ENCODE measurements at regions of chr19 and their contacts with region 1.

Region 1: GRCh38 chr19:40662921-40663694 is 27.3 kb downstream of the NUMBL start:
- DNase-seq: peak; percentile 80 to 95
- ATAC-seq: peak; percentile 96

Region 2: DNA sequence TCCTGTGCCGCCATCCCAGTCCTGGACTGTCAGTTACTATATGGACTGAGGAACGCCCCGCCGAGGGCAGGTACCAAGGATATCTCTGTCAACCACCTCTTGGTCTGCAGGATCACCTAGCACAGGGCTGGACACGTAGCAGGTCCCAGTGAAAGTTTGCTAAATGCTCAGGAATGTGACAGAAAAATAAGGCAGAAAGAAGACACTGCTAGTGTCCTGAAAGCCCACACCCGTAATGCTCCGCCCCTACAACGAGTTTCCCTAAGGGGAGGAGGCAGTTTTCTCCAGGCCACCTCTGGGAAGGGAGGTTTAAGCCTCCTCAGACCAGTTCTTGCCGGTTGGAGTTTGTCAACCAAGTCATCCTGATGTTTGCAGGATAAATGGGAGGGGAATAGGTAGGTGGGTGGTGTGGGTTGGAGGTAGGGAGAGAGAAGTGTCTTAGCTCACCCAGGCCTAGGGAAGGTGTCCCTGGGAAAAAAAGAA is 217.3 kb before region 1 on chr19:
- intact Hi-C with region 1: no loop called
- DNase-seq: peak; percentile 61 to 73
- ATAC-seq: peak; percentile 19

Region 3: DNA sequence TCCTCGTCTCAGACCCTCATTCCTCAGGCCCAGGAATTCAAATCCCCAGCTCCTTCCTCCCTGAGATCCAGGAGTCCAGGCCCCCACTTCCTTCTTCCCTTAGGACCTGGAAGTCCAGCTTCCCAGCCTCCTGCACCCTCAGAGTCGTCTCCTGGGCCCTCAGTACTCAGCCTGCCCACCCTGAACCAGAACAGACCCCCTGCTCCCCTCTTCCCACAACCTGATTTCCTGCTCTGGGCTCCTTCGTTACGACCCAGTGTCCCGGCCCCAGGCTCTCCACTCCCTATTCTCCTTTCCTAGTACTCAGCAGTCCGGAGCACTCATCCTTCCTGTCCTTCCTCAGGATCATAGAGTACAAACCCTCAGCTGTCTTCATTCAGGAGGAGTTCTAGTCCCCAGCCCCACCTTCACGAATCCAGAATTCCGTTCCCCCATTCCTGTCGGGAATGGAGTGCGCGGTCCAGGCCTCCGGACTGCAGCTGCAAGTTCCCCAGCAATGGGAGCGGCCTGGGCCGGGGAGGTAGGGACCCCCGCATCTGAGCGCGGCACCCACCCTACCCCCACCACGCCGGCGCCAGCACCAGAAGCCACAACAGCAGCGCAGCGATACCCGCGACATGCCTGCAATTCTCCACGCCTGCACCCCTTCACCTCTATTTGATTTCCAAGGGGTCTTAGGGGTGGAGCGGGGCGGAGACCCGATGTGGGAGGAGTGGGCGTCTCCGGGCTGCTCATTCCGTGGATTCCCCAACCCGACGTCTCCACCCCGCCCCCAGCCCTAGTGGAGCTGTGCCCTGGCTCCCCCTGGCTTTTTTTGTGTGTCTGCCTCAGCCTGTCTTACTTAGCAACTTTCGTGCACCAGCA is 148.6 kb after region 1 on chr19:
- intact Hi-C with region 1: loop called (anchors 5 kb)
- DNase-seq: peak in 1 of 2 donors; percentile 43
- ATAC-seq: peak; percentile 16

Region 4: DNA sequence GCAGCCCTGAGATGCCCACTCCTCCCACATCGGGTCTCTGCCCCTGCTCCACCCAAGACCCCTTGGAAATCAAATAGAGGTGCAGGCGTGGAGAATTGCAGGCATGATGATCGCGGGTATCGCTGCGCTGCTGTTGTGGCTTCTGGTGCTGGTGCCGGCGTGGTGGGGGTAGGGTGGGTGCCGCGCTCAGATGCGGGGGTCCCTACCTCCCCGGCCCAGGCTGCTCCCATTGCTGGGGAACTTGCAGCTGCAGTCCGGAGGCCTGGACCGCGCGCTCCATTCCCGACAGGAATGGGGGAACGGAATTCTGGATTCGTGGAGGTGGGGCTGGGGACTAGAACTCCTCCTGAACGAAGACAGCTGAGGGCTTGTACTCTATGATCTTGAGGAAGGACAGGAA is 471.5 kb after region 1 on chr19:
- intact Hi-C with region 1: loop called in 1 of 2 experiments (anchors 5 kb)
- DNase-seq: no peak
- ATAC-seq: no peak

Measured in left colon (tissue), 2 donors.